Heart right ventricle (tissue), 16 donors: ENCODE measurements at regions of chr18 and their contacts with region 1.

Region 1: GRCh38 chr18:346610-347009 is 78.8 kb upstream of the THOC1 start:
- DNase-seq: no peak
- ATAC-seq: no peak
- H3K4me3 ChIP-seq: no peak overlapping the region
- H3K27ac ChIP-seq: no peak overlapping the region
- H3K4me1 ChIP-seq: peaks cover 0 to 9% (median 0%) of the 10 kb centered on the region in 9 donors
- H3K27me3 ChIP-seq: peaks cover 0 to 4% (median 0%) of the 10 kb centered on the region in 7 donors
- CTCF ChIP-seq: no peak

Region 2: DNA sequence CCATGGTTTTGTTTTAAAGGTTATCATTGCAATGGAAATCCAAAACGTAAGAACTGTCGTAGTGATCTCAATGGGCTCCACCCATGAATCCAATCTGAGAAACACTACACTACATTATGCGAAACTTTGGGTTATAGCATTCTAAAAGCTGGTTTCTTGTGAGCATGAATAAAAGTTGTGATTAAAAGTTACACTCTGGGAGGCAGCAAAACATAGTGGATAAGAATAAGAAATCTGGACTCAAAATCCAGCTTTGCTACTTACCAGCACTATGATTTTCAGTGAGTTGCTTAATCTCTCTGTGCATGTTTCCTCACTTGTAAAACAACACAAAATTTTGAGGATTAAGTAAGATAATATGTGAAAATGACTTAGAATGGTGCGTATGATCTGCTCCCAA is 53.1 kb before region 1 on chr18:
- intact Hi-C with region 1: loop called in 1 of 10 experiments (anchors 10 kb)
- DNase-seq: no peak
- ATAC-seq: peak in 2 of 8 donors; percentile 46 to 49
- H3K4me3 ChIP-seq: no peak overlapping the region
- H3K27ac ChIP-seq: no peak overlapping the region
- H3K4me1 ChIP-seq: peaks cover 0 to 4% (median 0%) of the 10 kb centered on the region in 9 donors
- H3K27me3 ChIP-seq: peaks cover 0 to 7% (median 0%) of the 10 kb centered on the region in 7 donors
- CTCF ChIP-seq: peak in 5 of 9 donors; percentile 11 to 37 (median 18)

Region 3: GRCh38 chr18:484749-485464 is 138.3 kb after region 1 on chr18:
- intact Hi-C with region 1: no loop called
- DNase-seq: no peak
- ATAC-seq: peak in 7 of 8 donors; percentile 42 to 78 (median 52)
- H3K4me3 ChIP-seq: no peak overlapping the region
- H3K27ac ChIP-seq: no peak overlapping the region
- H3K4me1 ChIP-seq: peaks cover 0 to 35% (median 0%) of the 10 kb centered on the region in 9 donors
- H3K27me3 ChIP-seq: peaks cover 0 to 6% (median 0%) of the 10 kb centered on the region in 7 donors
- CTCF ChIP-seq: no peak